ENCODE measurements at regions of chr2 and their contacts with region 1.

Region 1: GRCh38 chr2:677056-677965 is at the start of gene TMEM18:
- DNase-seq: peak; percentile 98
- ATAC-seq: peak; percentile 43
- H3K4me3 ChIP-seq: peak within 1 kb of the TSS; percentile 85
- H3K27ac ChIP-seq: peak within 1 kb of the TSS; percentile 93
- H3K4me1 ChIP-seq: peaks cover 40% of the 10 kb centered on the region
- H3K27me3 ChIP-seq: no peaks in the 10 kb centered on the region
- CTCF ChIP-seq: peak; percentile 22; the same call in 1 of the 2 replicates
- total RNA-seq, gene TMEM18: 25.5 and 30.8 TPM in 2 replicates

Region 2: DNA sequence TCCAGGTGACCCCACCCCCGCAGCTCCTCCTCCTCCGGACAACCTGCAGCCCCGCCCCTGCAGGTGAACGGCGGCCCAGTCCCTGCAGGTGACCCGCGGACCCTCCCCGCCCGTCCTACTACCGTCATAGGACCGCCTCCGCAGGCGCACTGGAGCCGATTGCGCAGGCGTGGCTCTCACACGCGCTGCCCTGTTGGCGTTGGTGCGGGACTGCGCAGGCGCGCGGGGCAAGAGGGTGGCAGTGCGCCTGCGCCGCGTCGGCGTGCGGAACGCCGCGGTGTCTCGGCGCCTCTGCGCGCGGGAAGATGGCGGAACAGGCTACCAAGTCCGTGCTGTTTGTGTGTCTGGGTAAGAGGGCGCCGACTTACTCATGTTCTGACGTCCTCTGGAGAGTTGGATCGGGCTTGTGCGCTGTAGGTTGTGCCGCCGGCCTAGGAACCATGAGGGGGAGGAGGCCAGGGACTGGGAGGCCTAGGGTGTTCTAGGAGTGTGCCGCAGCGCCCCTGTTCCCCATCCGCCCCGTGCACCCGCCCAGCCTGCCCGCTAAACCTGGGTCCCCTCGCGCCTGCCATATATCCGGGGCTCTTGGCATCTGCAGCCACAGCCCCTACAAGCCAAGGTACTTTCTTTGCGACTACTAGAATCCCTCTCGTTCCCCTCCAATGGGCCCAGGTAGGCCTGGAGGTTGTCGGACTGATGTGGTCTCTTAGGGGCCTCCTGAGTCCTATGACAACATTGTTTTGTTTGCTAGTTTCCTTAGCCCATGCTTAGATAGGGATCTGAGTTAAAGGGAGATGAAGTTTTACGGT is 412.4 kb before region 1 on chr2 and contains the start of gene ACP1:
- CTCF ChIA-PET with region 1: no interaction called
- POLR2A ChIA-PET with region 1: no interaction called
- intact Hi-C with region 1: loop called (anchors 10 kb)
- DNase-seq: peak; percentile 98
- ATAC-seq: peak; percentile 81
- H3K4me3 ChIP-seq: peak within 1 kb of the TSS; percentile 89
- H3K27ac ChIP-seq: peak within 1 kb of the TSS; percentile 68
- H3K4me1 ChIP-seq: peaks cover 31% of the 10 kb centered on the region
- H3K27me3 ChIP-seq: no peaks in the 10 kb centered on the region
- CTCF ChIP-seq: no peak
- total RNA-seq, gene ACP1: 109 and 149 TPM in 2 replicates

Region 3: DNA sequence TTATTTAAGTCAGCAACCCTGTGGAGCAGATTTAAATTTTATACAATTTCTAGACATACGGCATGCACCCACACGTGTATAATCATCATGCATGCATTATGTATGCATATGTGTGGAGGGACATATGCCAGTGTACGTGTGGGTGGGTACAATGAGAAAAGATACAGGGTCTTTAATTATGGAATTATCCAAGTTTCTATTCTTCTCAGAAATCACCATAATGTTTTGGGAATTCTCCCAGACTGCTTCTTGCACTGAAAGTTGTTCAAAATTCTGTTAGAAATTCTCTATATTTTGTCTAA is 63.8 kb after region 1 on chr2:
- CTCF ChIA-PET with region 1: no interaction called
- POLR2A ChIA-PET with region 1: interaction called, 3 read pairs
- intact Hi-C with region 1: loop called (anchors 2 kb)
- DNase-seq: no peak
- ATAC-seq: no peak
- H3K4me3 ChIP-seq: peak overlapping the region; percentile 69
- H3K27ac ChIP-seq: no peak overlapping the region
- H3K4me1 ChIP-seq: peaks cover 13% of the 10 kb centered on the region
- H3K27me3 ChIP-seq: peaks cover 8% of the 10 kb centered on the region; the same call in 1 of the 2 replicates
- CTCF ChIP-seq: no peak

Region 4: GRCh38 chr2:1730015-1730927 is 1053.0 kb after region 1 on chr2:
- CTCF ChIA-PET with region 1: no interaction called
- POLR2A ChIA-PET with region 1: no interaction called
- intact Hi-C with region 1: loop called (anchors 10 kb)
- DNase-seq: peak; percentile 92
- ATAC-seq: peak; percentile 68
- H3K4me3 ChIP-seq: peak overlapping the region; percentile 48
- H3K27ac ChIP-seq: peak overlapping the region; percentile 97
- H3K4me1 ChIP-seq: peaks cover 57% of the 10 kb centered on the region
- H3K27me3 ChIP-seq: no peaks in the 10 kb centered on the region
- CTCF ChIP-seq: no peak

Measured in PC-3 (cell line).